ENCODE measurements at regions of chr18 and their contacts with region 1.

Region 1: GRCh38 chr18:12236934-12237832 is 17.0 kb upstream of the CIDEA start:
- DNase-seq: peak; percentile 86
- CTCF ChIP-seq: peak; percentile 97

Region 2: GRCh38 chr18:12049978-12050811 is 187.0 kb before region 1 on chr18:
- in situ Hi-C with region 1: loop called (anchors 25 kb)
- DNase-seq: peak; percentile 60
- CTCF ChIP-seq: no peak

Region 3: GRCh38 chr18:12433829-12434548 is 196.8 kb after region 1 on chr18:
- in situ Hi-C with region 1: no loop called
- DNase-seq: no peak
- CTCF ChIP-seq: no peak

Region 4: DNA sequence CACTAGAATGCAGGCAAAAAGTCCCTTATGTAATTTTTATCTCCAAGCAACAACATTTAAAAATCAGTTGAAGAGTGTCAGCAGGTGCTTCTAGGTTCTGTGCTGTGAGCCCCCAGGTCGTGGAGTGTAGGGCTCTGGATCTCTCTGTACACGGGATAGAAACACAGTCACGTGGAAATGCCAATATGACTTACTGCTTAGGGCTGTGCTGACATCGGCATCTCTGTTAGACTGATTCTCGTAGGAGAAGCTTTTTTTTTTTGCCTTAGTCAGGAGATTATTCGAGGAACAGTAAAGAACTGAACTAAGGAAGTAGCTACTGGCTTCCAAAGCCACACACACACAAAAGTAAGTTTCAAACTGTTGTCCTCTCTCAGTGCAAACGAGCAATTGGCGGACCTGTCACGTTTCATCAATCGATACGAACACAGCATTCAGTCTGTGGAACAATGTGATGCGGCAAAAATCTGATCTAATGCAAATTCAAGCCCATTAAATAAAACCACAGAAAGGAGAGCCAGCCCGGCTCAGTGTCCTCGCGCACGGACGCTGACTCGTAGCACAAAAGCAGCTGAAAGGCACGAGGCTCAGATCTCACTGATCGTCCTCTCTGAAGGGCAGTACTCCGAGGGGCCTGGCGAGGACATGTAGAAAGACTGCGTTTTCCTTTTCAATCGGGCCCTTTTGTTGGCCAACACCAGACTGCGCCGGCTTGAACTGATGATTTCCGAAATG is 212.0 kb after region 1 on chr18:
- in situ Hi-C with region 1: no loop called
- DNase-seq: no peak
- CTCF ChIP-seq: no peak